Vagina (tissue), 2 donors: ENCODE measurements at regions of chr19 and their contacts with region 1.

Region 1: GRCh38 chr19:28764066-28764465 is 448.9 kb downstream of the UQCRFS1 start:
- DNase-seq: no peak
- H3K4me3 ChIP-seq: no peak overlapping the region
- H3K27ac ChIP-seq: no peak overlapping the region
- H3K4me1 ChIP-seq: no peaks in the 10 kb centered on the region
- H3K27me3 ChIP-seq: no peaks in the 10 kb centered on the region
- CTCF ChIP-seq: no peak
- POLR2A ChIP-seq: no peak

Region 2: DNA sequence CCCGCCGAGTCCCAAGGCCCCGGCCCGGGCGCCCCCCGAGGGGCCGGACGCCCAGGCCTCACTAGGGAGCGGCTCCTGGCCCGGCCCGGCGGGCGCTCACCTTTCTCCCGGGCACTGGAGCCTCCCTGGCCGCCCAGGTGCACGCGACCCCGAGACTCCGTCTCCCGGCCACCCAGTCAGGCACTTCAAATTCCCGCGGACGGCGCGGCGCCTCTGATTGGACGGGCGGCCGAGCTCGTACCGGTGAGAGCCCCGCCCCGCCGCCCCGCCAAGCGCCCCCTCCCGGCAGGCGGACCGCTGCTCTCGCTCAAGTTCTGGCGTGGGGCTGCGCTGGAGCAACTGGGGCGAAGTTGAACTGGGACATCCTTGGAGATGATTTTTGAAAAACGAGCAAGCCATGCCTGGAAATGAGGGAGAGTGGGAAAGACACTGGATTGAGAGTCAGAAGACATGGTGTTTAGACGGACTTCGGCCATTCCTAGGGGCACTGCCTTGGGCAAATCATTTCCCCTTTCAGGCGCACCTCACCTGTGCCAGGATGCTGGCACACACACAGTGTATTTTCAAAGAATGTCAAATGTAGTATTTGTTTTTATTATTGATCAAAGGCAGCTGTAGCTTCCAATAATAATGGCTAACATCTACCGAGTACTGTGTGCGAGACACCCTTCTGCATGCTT is 36.4 kb before region 1 on chr19:
- intact Hi-C with region 1: no loop called
- DNase-seq: no peak
- H3K4me3 ChIP-seq: peak overlapping the region in 1 of 2 donors; percentile 10
- H3K27ac ChIP-seq: no peak overlapping the region
- H3K4me1 ChIP-seq: peaks cover 8% of the 10 kb centered on the region
- H3K27me3 ChIP-seq: peaks cover 8% of the 10 kb centered on the region
- CTCF ChIP-seq: no peak
- POLR2A ChIP-seq: no peak

Region 3: GRCh38 chr19:28836421-28836820 is 72.4 kb after region 1 on chr19:
- intact Hi-C with region 1: loop called (anchors 2 kb)
- DNase-seq: no peak
- H3K4me3 ChIP-seq: no peak overlapping the region
- H3K27ac ChIP-seq: no peak overlapping the region
- H3K4me1 ChIP-seq: no peaks in the 10 kb centered on the region
- H3K27me3 ChIP-seq: no peaks in the 10 kb centered on the region
- CTCF ChIP-seq: no peak
- POLR2A ChIP-seq: no peak